ENCODE measurements at regions of chr10 and their contacts with region 1.

Region 1: DNA sequence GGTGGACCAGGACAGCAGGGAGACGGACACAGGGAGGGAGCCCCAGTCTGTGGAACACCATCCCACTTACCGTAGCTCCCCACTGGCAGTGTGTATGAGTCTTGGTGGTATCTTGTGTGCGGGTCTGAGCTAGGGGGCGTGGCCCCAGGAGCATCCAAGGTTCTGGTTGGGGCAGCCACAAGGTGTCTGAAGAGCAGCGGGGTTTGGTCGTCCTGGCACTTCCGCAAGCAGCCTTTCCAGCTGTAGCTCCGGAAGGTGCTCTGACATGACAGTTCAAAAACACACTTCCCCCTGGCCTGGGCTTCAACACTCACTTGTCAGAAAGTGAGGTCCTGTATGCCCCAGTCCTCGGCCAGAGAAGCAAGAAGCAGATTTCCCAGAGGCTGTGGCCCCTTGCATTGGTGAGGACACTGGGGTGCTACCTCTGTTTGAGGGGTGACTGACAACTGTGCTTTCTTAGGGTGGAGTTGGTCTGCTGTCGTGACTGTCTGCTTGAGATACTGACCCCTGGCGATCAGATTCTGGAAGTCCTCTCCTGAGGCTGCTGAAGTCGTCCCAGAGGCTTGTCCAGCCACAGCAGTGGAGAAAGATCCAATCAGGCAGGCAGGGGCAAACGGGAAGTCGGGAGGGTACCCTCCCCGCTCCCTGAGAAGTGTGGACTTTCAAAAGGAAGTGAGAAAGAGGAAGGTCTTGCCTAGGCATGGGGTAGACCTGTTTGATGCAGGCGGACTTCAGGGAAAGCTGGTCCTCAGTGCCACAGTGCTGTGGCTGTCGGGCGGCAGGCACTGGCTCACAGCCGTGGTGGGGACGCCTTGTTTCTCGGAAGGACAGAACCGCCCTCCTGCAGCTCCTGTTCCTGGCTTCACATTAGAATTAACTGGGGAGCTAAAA is 51.4 kb upstream of the PFKFB3 start:
- DNase-seq: peak; percentile 70
- H3K4me3 Mint-ChIP-seq: peak overlapping the region; percentile 51
- H3K27ac Mint-ChIP-seq: peak overlapping the region; percentile 80
- H3K4me1 Mint-ChIP-seq: peaks cover 62% of the 10 kb centered on the region
- H3K27me3 Mint-ChIP-seq: no peaks in the 10 kb centered on the region

Region 2: GRCh38 chr10:6050801-6051445 is 100.4 kb before region 1 on chr10:
- CTCF ChIA-PET with region 1: no interaction called
- DNase-seq: peak; percentile 97
- H3K4me3 Mint-ChIP-seq: peak overlapping the region; percentile 87
- H3K27ac Mint-ChIP-seq: peak overlapping the region; percentile 99
- H3K4me1 Mint-ChIP-seq: peaks cover 86% of the 10 kb centered on the region
- H3K27me3 Mint-ChIP-seq: no peaks in the 10 kb centered on the region

Region 3: GRCh38 chr10:6108603-6109443 is 42.5 kb before region 1 on chr10:
- CTCF ChIA-PET with region 1: interaction called, 53 read pairs
- DNase-seq: peak; percentile 50
- H3K4me3 Mint-ChIP-seq: no peak overlapping the region
- H3K27ac Mint-ChIP-seq: peak overlapping the region; percentile 53
- H3K4me1 Mint-ChIP-seq: peaks cover 24% of the 10 kb centered on the region
- H3K27me3 Mint-ChIP-seq: no peaks in the 10 kb centered on the region

Region 4: GRCh38 chr10:6136215-6137201 is 14.8 kb before region 1 on chr10:
- CTCF ChIA-PET with region 1: interaction called, 23 read pairs
- DNase-seq: peak; percentile 47
- H3K4me3 Mint-ChIP-seq: no peak overlapping the region
- H3K27ac Mint-ChIP-seq: peak overlapping the region; percentile 68
- H3K4me1 Mint-ChIP-seq: peaks cover 57% of the 10 kb centered on the region
- H3K27me3 Mint-ChIP-seq: peaks cover 51% of the 10 kb centered on the region

Region 5: DNA sequence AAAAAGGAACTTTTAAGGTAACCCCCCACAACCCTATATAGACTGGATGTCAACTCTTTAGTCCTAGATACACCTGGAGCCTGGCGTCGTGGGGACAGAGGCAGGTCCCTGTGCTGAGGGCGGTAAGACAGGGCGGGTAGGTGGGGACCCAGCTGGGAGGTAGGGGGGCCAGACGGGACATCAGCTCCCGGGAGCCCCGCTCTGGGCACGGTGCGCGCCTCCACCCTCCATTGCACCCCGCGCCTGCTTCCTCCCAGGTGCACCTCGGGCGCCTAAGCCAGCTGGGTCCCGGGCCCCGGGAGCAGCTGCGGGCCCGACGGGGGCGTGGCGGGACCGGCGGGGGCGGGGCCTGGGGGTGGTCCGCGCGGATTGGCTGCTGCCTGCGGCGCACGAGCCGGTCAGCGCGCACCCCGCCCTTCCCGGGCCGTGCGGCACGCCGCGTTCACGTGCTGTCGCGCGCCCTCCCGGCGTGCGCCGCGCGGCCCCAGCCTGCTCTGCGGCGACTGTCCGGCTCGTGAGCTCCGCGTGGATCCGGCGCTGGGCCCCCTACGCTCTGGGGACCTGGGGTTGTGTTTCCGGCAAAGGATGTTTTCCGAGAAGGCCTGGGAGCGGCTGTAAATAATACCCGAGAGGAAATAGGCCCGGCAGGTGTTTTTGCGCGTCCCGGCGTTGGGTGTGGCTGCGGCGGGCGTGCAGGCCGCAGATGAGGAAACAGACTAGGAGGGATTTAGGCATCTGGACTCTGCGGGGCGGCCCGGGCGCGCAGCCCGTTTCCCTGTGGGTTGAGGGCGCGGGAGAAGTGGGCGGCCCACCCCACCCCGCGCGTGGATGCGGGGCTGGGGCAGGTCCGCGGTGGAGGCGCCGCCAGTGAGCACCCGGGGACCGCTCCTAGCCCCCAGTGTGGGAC is 12.3 kb after region 1 on chr10:
- CTCF ChIA-PET with region 1: interaction called, 22 read pairs
- DNase-seq: peak; percentile 95
- H3K4me3 Mint-ChIP-seq: peak overlapping the region; percentile 85
- H3K27ac Mint-ChIP-seq: peak overlapping the region; percentile 94
- H3K4me1 Mint-ChIP-seq: peaks cover 57% of the 10 kb centered on the region
- H3K27me3 Mint-ChIP-seq: no peaks in the 10 kb centered on the region

Region 6: DNA sequence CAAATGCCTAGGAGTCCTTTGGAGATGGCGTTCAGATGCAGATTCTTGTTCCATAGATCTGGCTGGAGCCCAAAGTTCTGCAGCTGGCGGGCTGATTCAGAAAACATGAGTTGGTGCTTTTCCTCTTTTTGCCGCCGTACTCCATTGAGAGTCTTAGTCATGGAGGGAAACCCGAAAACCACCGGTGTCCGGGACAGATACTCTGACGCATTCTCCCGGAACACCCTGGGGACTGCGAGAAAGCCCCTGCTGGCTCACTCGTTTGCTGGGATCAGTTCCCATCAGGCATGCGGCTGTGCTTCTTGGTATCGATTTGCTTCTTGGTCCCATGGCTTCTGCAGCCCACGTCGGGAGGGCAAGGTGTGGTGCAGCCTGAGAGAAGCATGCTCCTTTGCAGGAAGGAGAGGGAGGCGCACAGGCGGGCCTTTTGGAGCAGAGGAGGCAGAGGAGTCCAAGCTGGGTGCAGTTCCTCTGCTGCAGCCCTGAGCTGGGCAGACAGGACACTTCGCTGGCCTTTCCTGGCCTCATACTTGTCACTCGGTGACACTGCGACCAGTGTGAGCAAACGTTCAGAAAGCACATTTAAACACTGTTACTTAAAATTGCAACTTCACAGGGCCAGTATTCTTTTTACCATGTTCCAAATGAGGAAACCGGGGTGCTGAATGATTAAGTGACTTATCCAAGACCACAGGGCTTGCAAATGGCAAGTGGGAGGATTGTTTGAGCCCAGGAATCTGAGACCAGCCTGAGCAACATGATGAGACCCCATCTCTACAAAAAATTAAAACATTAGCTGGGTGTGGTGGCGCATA is 20.8 kb after region 1 on chr10:
- CTCF ChIA-PET with region 1: interaction called, 11 read pairs
- DNase-seq: no peak
- H3K4me3 Mint-ChIP-seq: no peak overlapping the region
- H3K27ac Mint-ChIP-seq: no peak overlapping the region
- H3K4me1 Mint-ChIP-seq: peaks cover 84% of the 10 kb centered on the region
- H3K27me3 Mint-ChIP-seq: no peaks in the 10 kb centered on the region

Region 7: GRCh38 chr10:6202684-6203330 is 51.5 kb after region 1 on chr10 and contains the start of gene PFKFB3:
- CTCF ChIA-PET with region 1: interaction called, 11 read pairs
- DNase-seq: peak; percentile 94
- H3K4me3 Mint-ChIP-seq: peak within 1 kb of the TSS; percentile 94
- H3K27ac Mint-ChIP-seq: peak within 1 kb of the TSS; percentile 95
- H3K4me1 Mint-ChIP-seq: peaks cover 41% of the 10 kb centered on the region
- H3K27me3 Mint-ChIP-seq: peaks cover 3% of the 10 kb centered on the region

Measured in activated naive CD4-positive, alpha-beta T cell treated with anti-CD3 and anti-CD28 coated beads, Interleukin-2, amount 10 ng/mL, durations not matched to agents 7 days and 5 days (primary cell).